ENCODE measurements at regions of chr21 and their contacts with region 1.

Region 1: DNA sequence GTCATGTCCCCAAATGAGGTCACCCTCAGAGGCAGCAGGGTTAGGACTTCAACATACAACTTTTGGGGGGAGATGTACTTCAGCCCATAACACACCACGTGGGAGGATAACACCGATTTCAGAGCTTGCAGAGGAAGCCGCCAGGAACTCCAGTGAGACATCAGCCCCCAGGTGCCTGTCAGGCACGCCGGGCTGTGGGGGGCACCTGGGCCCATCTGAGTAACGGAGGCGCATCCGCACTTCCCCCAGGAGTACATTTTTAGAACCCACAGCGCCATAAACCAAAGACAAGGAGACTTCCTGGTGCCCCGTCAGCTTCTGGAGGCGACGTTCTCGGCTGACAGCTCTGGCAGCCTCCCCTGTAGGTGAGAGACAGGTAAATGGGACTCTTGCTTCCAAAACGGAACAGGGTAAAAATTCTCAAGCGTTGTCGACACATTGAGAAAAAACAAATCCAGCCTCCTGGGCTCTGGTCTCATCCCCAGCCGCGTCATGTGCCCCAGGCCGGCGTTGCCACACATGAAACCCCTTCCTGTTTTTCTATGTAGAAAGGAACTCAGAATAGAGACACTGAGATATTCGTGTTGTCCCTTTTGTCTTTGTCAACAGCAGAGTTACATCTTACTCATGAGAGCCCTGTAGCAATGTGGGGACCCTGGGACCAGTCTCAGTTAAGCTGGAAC is 93.3 kb downstream of the PDE9A start:
- DNase-seq: peak; percentile 62 to 75 (median 67)
- H3K4me3 ChIP-seq: peak overlapping the region in 1 of 2 donors; percentile 5
- H3K4me3 Mint-ChIP-seq: peak overlapping the region; percentile 69 to 88 (median 76)
- H3K27ac ChIP-seq: peak overlapping the region; percentile 54
- H3K27ac Mint-ChIP-seq: peak overlapping the region; percentile 84 to 99 (median 96)
- H3K4me1 ChIP-seq: peaks cover 29% of the 10 kb centered on the region
- H3K4me1 Mint-ChIP-seq: peaks cover 9 to 38% (median 28%) of the 10 kb centered on the region in 4 donors
- H3K27me3 ChIP-seq: no peaks in the 10 kb centered on the region
- H3K27me3 Mint-ChIP-seq: no peaks in the 10 kb centered on the region

Region 2: GRCh38 chr21:42337830-42338728 is 408.7 kb before region 1 on chr21:
- CTCF ChIA-PET with region 1: no interaction called
- POLR2A ChIA-PET with region 1: no interaction called
- intact Hi-C with region 1: no loop called
- DNase-seq: peak; percentile 74 to 81 (median 78)
- H3K4me3 ChIP-seq: no peak overlapping the region
- H3K4me3 Mint-ChIP-seq: peak overlapping the region in 3 of 8 donors; percentile 7 to 41 (median 38)
- H3K27ac ChIP-seq: no peak overlapping the region
- H3K27ac Mint-ChIP-seq: peak overlapping the region in 6 of 7 donors; percentile 18 to 82 (median 50)
- H3K4me1 ChIP-seq: peaks cover 10% of the 10 kb centered on the region
- H3K4me1 Mint-ChIP-seq: peaks cover 5 to 14% (median 8%) of the 10 kb centered on the region in 4 donors
- H3K27me3 ChIP-seq: no peaks in the 10 kb centered on the region
- H3K27me3 Mint-ChIP-seq: peaks cover 2 to 4% of the 10 kb centered on the region in 2 donors

Region 3: GRCh38 chr21:42781150-42781970 is 34.6 kb after region 1 on chr21:
- CTCF ChIA-PET with region 1: interaction called, 3 read pairs
- POLR2A ChIA-PET with region 1: interaction called, 35 read pairs
- intact Hi-C with region 1: no loop called
- DNase-seq: no peak
- H3K4me3 ChIP-seq: no peak overlapping the region
- H3K4me3 Mint-ChIP-seq: peak overlapping the region in 7 of 8 donors; percentile 40 to 80 (median 63)
- H3K27ac ChIP-seq: no peak overlapping the region
- H3K27ac Mint-ChIP-seq: peak overlapping the region in 4 of 7 donors; percentile 62 to 79 (median 66)
- H3K4me1 ChIP-seq: peaks cover 43% of the 10 kb centered on the region
- H3K4me1 Mint-ChIP-seq: peaks cover 30 to 51% (median 40%) of the 10 kb centered on the region in 4 donors
- H3K27me3 ChIP-seq: no peaks in the 10 kb centered on the region
- H3K27me3 Mint-ChIP-seq: no peaks in the 10 kb centered on the region

Region 4: DNA sequence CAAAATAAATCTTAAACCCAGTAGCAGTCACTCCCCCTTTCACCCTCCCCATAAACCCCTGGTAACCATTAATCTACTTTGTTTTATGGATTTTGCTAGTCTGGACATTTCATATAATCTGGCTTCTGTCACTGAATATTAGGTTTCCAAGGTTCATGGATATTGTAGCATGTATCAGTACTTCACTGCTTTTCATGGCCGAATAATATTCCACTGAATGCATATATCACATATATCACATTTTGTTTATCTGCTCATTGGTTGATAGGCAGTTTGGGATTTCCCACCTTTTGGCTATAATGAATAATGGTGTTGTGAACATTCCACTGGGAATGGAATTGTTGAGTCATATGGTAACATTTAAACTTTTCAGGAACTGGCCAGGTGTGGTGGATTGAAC is 137.2 kb after region 1 on chr21:
- CTCF ChIA-PET with region 1: no interaction called
- POLR2A ChIA-PET with region 1: no interaction called
- intact Hi-C with region 1: no loop called
- DNase-seq: no peak
- H3K4me3 ChIP-seq: no peak overlapping the region
- H3K4me3 Mint-ChIP-seq: no peak overlapping the region
- H3K27ac ChIP-seq: no peak overlapping the region
- H3K27ac Mint-ChIP-seq: no peak overlapping the region
- H3K4me1 ChIP-seq: peaks cover 9% of the 10 kb centered on the region
- H3K4me1 Mint-ChIP-seq: peaks cover 13 to 24% (median 15%) of the 10 kb centered on the region in 4 donors
- H3K27me3 ChIP-seq: no peaks in the 10 kb centered on the region
- H3K27me3 Mint-ChIP-seq: peaks cover 0 to 3% of the 10 kb centered on the region in 2 donors

Measured in CD4-positive, alpha-beta memory T cell (primary cell).